ENCODE measurements at regions of chr4 and their contacts with region 1.

Region 1: GRCh38 chr4:42729505-42730237 is 72.8 kb upstream of the ATP8A1 start:
- DNase-seq: no peak
- ATAC-seq: no peak
- H3K4me3 ChIP-seq: no peak overlapping the region
- H3K27ac ChIP-seq: no peak overlapping the region
- H3K4me1 ChIP-seq: no peaks in the 10 kb centered on the region
- H3K27me3 ChIP-seq: no peaks in the 10 kb centered on the region
- CTCF ChIP-seq: no peak
- POLR2A ChIP-seq: no peak
- RAD21 ChIP-seq: no peak

Region 2: GRCh38 chr4:42234817-42235216 is 494.9 kb before region 1 on chr4:
- CTCF ChIA-PET with region 1: no interaction called
- POLR2A ChIA-PET with region 1: no interaction called
- RAD21 ChIA-PET with region 1: no interaction called
- intact Hi-C with region 1: no loop called
- DNase-seq: no peak
- ATAC-seq: no peak
- H3K4me3 ChIP-seq: no peak overlapping the region
- H3K27ac ChIP-seq: no peak overlapping the region
- H3K4me1 ChIP-seq: no peaks in the 10 kb centered on the region
- H3K27me3 ChIP-seq: peaks cover 8% of the 10 kb centered on the region; the same call in 1 of the 2 replicates
- CTCF ChIP-seq: no peak
- POLR2A ChIP-seq: no peak
- RAD21 ChIP-seq: no peak

Region 3: DNA sequence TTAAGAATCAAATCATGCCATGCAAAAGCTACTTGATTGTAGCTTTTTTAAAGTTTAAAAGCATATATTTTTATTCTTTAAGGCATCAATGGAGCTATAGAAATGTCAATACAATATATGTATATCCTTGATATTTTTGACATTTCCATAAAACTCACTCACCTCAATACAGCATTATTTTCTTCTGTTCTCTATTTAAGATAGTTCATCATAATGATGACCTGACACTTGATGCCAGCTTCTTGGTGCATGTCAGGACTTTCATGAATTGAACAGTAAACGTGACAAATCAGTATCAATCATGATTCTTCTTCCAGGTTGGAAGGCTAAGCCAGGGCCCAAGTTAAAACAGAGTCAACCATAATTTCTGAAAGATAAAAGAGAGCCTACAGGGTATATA is 39.1 kb before region 1 on chr4:
- CTCF ChIA-PET with region 1: no interaction called
- POLR2A ChIA-PET with region 1: no interaction called
- RAD21 ChIA-PET with region 1: no interaction called
- intact Hi-C with region 1: loop called (anchors 5 kb)
- DNase-seq: no peak
- ATAC-seq: no peak
- H3K4me3 ChIP-seq: no peak overlapping the region
- H3K27ac ChIP-seq: no peak overlapping the region
- H3K4me1 ChIP-seq: no peaks in the 10 kb centered on the region
- H3K27me3 ChIP-seq: no peaks in the 10 kb centered on the region
- CTCF ChIP-seq: no peak
- POLR2A ChIP-seq: no peak
- RAD21 ChIP-seq: no peak

Region 4: DNA sequence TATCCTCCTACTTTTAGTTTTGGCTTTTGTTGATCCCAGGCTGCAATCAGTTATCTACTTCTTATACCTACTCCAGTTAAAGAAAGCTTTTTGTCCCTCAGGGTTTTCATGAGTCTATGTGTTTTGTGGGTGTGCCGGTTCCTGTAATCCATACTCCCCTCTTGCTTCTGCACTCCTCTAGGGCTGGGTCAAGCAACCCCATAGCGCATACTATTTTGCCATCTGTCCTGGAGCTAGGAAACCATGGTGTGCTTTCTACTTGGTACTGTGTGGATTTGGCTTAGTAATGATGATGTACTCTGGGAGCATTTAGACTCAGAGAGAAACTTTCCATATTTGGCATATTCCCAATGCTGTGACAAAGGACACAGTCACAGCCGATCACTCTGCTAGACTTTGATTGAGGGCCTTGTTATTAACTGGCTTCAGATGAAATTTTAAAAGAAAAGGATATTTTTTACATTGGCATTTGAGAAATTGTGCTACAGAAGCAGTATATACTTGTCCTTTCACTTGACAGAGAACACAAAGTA is 76.7 kb after region 1 on chr4:
- CTCF ChIA-PET with region 1: no interaction called
- POLR2A ChIA-PET with region 1: no interaction called
- RAD21 ChIA-PET with region 1: no interaction called
- intact Hi-C with region 1: no loop called
- DNase-seq: no peak
- ATAC-seq: no peak
- H3K4me3 ChIP-seq: no peak overlapping the region
- H3K27ac ChIP-seq: no peak overlapping the region
- H3K4me1 ChIP-seq: no peaks in the 10 kb centered on the region
- H3K27me3 ChIP-seq: no peaks in the 10 kb centered on the region
- CTCF ChIP-seq: no peak
- POLR2A ChIP-seq: no peak
- RAD21 ChIP-seq: no peak

Region 5: GRCh38 chr4:42865572-42866189 is 136.0 kb after region 1 on chr4:
- CTCF ChIA-PET with region 1: no interaction called
- POLR2A ChIA-PET with region 1: no interaction called
- RAD21 ChIA-PET with region 1: no interaction called
- intact Hi-C with region 1: no loop called
- DNase-seq: peak; percentile 29
- ATAC-seq: peak; percentile 44; the same call in 1 of the 2 replicates
- H3K4me3 ChIP-seq: no peak overlapping the region
- H3K27ac ChIP-seq: no peak overlapping the region
- H3K4me1 ChIP-seq: no peaks in the 10 kb centered on the region
- H3K27me3 ChIP-seq: no peaks in the 10 kb centered on the region
- CTCF ChIP-seq: peak; percentile 36 to 72 (median 57); a peak in 5 of 6 replicates
- POLR2A ChIP-seq: no peak
- RAD21 ChIP-seq: peak; percentile 56

Measured in HCT116 (cell line).